HepG2 (cell line): ENCODE measurements at regions of chr3 and their contacts with region 1.

Region 1: GRCh38 chr3:115819785-115820384 is 196.6 kb downstream of the GAP43 start:
- DNase-seq: peak; percentile 81
- ATAC-seq: peak; percentile 68
- H3K4me3 ChIP-seq: no peak overlapping the region
- H3K27ac ChIP-seq: no peak overlapping the region
- H3K4me1 ChIP-seq: peaks cover 49% of the 10 kb centered on the region
- H3K27me3 ChIP-seq: no peaks in the 10 kb centered on the region
- CTCF ChIP-seq: peak; percentile 95
- EP300 ChIP-seq: 0 out of 4 replicates have a peak, but pooled peaks of 1 of the 2 experiments have one; percentile 19
- POLR2A ChIP-seq: no peak
- RAD21 ChIP-seq: peak; percentile 77

Region 2: DNA sequence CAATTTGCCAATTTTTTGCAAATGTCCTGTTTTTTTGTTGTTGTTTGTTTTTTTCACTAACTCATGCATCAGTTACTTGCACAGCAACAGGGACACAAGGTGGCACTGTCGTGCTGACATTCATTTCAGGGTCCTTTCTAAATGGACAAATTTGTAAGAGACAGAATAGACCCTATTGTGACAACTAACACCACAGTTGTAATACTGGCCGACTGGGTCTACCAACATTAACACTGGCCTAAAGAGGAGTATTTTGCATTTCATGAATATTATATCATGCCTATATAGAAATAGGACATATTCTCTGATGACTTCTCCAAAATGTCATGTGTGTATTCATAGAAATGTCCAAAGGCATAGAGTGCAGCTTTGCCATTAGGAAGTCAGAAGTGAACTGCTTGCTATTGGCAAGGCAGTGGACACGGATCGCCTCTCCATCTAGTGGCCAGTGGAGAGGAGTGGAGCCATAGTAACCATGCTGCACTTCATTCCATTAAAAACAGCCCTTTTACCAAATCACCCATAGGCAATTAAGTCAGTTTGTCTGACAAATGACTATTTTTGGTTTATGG is 727.6 kb before region 1 on chr3:
- CTCF ChIA-PET with region 1: interaction called, 7 read pairs
- POLR2A ChIA-PET with region 1: no interaction called
- in situ Hi-C with region 1: loop called (anchors 10 kb)
- intact Hi-C with region 1: loop called (anchors 1 kb)
- DNase-seq: peak; percentile 34
- ATAC-seq: peak; percentile 100
- H3K4me3 ChIP-seq: no peak overlapping the region
- H3K27ac ChIP-seq: no peak overlapping the region
- H3K4me1 ChIP-seq: no peaks in the 10 kb centered on the region
- H3K27me3 ChIP-seq: no peaks in the 10 kb centered on the region
- CTCF ChIP-seq: peak; percentile 65
- EP300 ChIP-seq: no peak
- POLR2A ChIP-seq: no peak
- RAD21 ChIP-seq: no peak

Region 3: GRCh38 chr3:115836944-115837343 is 17.1 kb after region 1 on chr3:
- CTCF ChIA-PET with region 1: interaction called, 18 read pairs
- POLR2A ChIA-PET with region 1: no interaction called
- in situ Hi-C with region 1: no loop called
- intact Hi-C with region 1: loop called (anchors 2 kb)
- DNase-seq: no peak
- ATAC-seq: no peak
- H3K4me3 ChIP-seq: no peak overlapping the region
- H3K27ac ChIP-seq: no peak overlapping the region
- H3K4me1 ChIP-seq: peaks cover 7% of the 10 kb centered on the region
- H3K27me3 ChIP-seq: no peaks in the 10 kb centered on the region; a peak in 1 of 5 replicates
- CTCF ChIP-seq: peak; percentile 23; the same call in 1 of the 2 replicates
- EP300 ChIP-seq: no peak
- POLR2A ChIP-seq: no peak
- RAD21 ChIP-seq: no peak

Region 4: GRCh38 chr3:115843206-115843605 is 23.3 kb after region 1 on chr3:
- CTCF ChIA-PET with region 1: interaction called, 3 read pairs
- POLR2A ChIA-PET with region 1: interaction called, 10 read pairs
- in situ Hi-C with region 1: no loop called
- intact Hi-C with region 1: loop called (anchors 2 kb)
- DNase-seq: peak; percentile 95
- ATAC-seq: peak; percentile 99
- H3K4me3 ChIP-seq: no peak overlapping the region; a peak in 1 of 6 replicates
- H3K27ac ChIP-seq: peak overlapping the region; percentile 74
- H3K4me1 ChIP-seq: peaks cover 50% of the 10 kb centered on the region
- H3K27me3 ChIP-seq: no peaks in the 10 kb centered on the region
- CTCF ChIP-seq: no peak
- EP300 ChIP-seq: peak; percentile 12 to 84; a peak in 3 of 4 replicates
- POLR2A ChIP-seq: no peak
- RAD21 ChIP-seq: no peak

Region 5: GRCh38 chr3:115922681-115923347 is 102.9 kb after region 1 on chr3:
- CTCF ChIA-PET with region 1: interaction called, 11 read pairs
- POLR2A ChIA-PET with region 1: no interaction called
- in situ Hi-C with region 1: no loop called
- intact Hi-C with region 1: no loop called
- DNase-seq: peak; percentile 10
- ATAC-seq: peak; percentile 87
- H3K4me3 ChIP-seq: no peak overlapping the region
- H3K27ac ChIP-seq: no peak overlapping the region
- H3K4me1 ChIP-seq: no peaks in the 10 kb centered on the region
- H3K27me3 ChIP-seq: no peaks in the 10 kb centered on the region; a peak in 1 of 5 replicates
- CTCF ChIP-seq: peak; percentile 59
- EP300 ChIP-seq: no peak
- POLR2A ChIP-seq: no peak
- RAD21 ChIP-seq: no peak